ENCODE measurements at regions of chr1 and their contacts with region 1.

Region 1: GRCh38 chr1:32933742-32934322 is 30.8 kb downstream of the RNF19B start:
- DNase-seq: no peak
- ATAC-seq: peak; percentile 53

Region 2: GRCh38 chr1:32948905-32949304 is 15.1 kb after region 1 on chr1:
- intact Hi-C with region 1: no loop called
- DNase-seq: no peak
- ATAC-seq: peak; percentile 75

Region 3: DNA sequence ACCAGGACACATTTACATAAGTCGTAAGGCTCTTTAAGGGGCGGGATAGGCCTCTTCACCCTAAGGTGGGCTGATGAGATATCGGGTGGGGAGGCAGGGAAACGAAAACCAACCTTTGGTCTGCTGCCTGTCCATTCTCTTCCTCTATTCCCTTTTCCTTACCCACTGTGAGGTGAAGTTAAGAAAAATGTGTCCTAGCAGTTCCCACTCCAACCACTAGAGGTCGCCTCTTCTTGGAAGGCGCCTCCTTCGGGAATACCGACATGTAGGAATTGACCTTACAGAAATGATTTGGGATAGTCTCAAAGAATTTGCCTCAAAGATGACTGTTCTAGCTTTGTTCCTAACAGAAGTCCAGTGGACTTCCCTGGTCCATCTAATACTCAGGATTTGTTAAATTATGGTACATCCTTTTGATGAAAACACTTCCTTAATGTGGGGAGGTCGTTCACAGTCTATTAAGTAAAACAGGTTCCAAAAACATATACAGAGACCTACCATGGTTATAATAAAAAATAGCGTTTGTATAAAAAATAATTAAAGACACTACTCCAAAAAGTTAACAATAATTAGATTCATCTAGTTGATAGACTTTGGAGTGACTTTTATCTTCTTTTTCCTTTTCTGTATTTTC is 161.3 kb after region 1 on chr1:
- intact Hi-C with region 1: loop called (anchors 5 kb)
- DNase-seq: peak; percentile 81
- ATAC-seq: no peak